ENCODE measurements at regions of chr16 and their contacts with region 1.

Region 1: DNA sequence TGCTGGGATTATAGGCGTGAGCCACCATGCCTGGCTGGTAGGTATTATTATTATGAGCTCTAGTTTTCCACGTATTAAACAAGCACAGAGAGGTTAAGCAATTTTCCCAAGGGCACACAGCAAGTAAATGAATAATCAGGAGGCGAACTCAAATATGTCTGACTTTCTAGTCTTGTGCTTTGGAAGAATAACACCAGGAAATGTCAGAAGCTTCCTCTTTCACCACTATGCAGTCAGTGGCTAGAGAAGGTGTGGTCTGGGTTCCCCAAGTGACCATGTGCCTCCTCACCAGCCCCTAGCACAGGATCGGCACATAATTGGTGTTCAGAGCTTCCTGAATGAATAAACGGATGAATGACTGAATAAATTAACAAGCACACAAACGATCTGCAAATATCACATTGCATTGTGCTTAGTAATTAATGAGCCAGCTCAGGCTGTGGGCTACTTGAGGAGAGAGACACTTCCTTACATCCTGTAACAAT is 21.6 kb upstream of the SCNN1B start:
- DNase-seq: no peak
- H3K4me3 Mint-ChIP-seq: no peak overlapping the region
- H3K27ac Mint-ChIP-seq: no peak overlapping the region
- H3K4me1 Mint-ChIP-seq: peaks cover 37% of the 10 kb centered on the region
- H3K27me3 Mint-ChIP-seq: no peaks in the 10 kb centered on the region
- CTCF ChIP-seq: no peak

Region 2: DNA sequence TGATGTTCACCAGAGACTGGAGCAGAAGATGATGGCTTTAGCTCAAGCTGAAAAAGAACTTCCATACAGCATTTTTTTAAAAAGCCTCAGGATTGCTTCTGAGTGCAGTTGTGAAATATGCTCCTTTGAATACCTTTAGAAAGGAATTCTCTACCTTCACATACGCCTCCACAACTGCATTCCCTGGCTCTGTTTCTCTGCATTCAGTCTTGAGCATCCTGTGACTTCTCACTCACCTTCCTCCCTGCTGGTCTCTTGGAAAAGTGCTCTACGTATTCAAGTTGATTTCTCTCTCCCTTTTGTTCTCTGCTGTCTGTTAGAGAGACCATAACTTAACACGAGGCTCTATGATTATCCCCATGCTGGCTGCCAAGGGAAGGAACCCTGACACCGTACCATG is 432.1 kb before region 1 on chr16:
- CTCF ChIA-PET with region 1: no interaction called
- POLR2A ChIA-PET with region 1: no interaction called
- intact Hi-C with region 1: no loop called
- DNase-seq: peak; percentile 4
- H3K4me3 Mint-ChIP-seq: no peak overlapping the region
- H3K27ac Mint-ChIP-seq: no peak overlapping the region
- H3K4me1 Mint-ChIP-seq: peaks cover 16% of the 10 kb centered on the region
- H3K27me3 Mint-ChIP-seq: peaks cover 59% of the 10 kb centered on the region
- CTCF ChIP-seq: no peak

Region 3: GRCh38 chr16:23217646-23218045 is 62.9 kb before region 1 on chr16:
- CTCF ChIA-PET with region 1: interaction called, 3 read pairs
- POLR2A ChIA-PET with region 1: interaction called, 20 read pairs
- intact Hi-C with region 1: no loop called
- DNase-seq: peak; percentile 17
- H3K4me3 Mint-ChIP-seq: no peak overlapping the region
- H3K27ac Mint-ChIP-seq: peak overlapping the region; percentile 9
- H3K4me1 Mint-ChIP-seq: peaks cover 5% of the 10 kb centered on the region
- H3K27me3 Mint-ChIP-seq: no peaks in the 10 kb centered on the region
- CTCF ChIP-seq: no peak

Region 4: GRCh38 chr16:23254338-23254737 is 26.2 kb before region 1 on chr16:
- CTCF ChIA-PET with region 1: interaction called, 12 read pairs
- POLR2A ChIA-PET with region 1: interaction called, 204 read pairs
- intact Hi-C with region 1: no loop called
- DNase-seq: peak; percentile 75
- H3K4me3 Mint-ChIP-seq: no peak overlapping the region
- H3K27ac Mint-ChIP-seq: peak overlapping the region; percentile 82
- H3K4me1 Mint-ChIP-seq: peaks cover 40% of the 10 kb centered on the region
- H3K27me3 Mint-ChIP-seq: no peaks in the 10 kb centered on the region
- CTCF ChIP-seq: no peak

Region 5: GRCh38 chr16:23296994-23297393 is 16.5 kb after region 1 on chr16:
- CTCF ChIA-PET with region 1: interaction called, 6 read pairs
- POLR2A ChIA-PET with region 1: interaction called, 13 read pairs
- intact Hi-C with region 1: no loop called
- DNase-seq: no peak
- H3K4me3 Mint-ChIP-seq: no peak overlapping the region
- H3K27ac Mint-ChIP-seq: no peak overlapping the region
- H3K4me1 Mint-ChIP-seq: peaks cover 17% of the 10 kb centered on the region
- H3K27me3 Mint-ChIP-seq: no peaks in the 10 kb centered on the region
- CTCF ChIP-seq: no peak

Region 6: GRCh38 chr16:23324730-23325129 is 44.2 kb after region 1 on chr16:
- CTCF ChIA-PET with region 1: interaction called, 5 read pairs
- POLR2A ChIA-PET with region 1: interaction called, 26 read pairs
- intact Hi-C with region 1: no loop called
- DNase-seq: peak; percentile 95
- H3K4me3 Mint-ChIP-seq: peak overlapping the region; percentile 57
- H3K27ac Mint-ChIP-seq: peak overlapping the region; percentile 95
- H3K4me1 Mint-ChIP-seq: peaks cover 16% of the 10 kb centered on the region
- H3K27me3 Mint-ChIP-seq: no peaks in the 10 kb centered on the region
- CTCF ChIP-seq: no peak

Region 7: GRCh38 chr16:23391381-23392222 is 111.1 kb after region 1 on chr16:
- CTCF ChIA-PET with region 1: interaction called, 3 read pairs
- POLR2A ChIA-PET with region 1: interaction called, 40 read pairs
- intact Hi-C with region 1: no loop called
- DNase-seq: peak; percentile 29
- H3K4me3 Mint-ChIP-seq: no peak overlapping the region
- H3K27ac Mint-ChIP-seq: peak overlapping the region; percentile 92
- H3K4me1 Mint-ChIP-seq: peaks cover 36% of the 10 kb centered on the region
- H3K27me3 Mint-ChIP-seq: no peaks in the 10 kb centered on the region
- CTCF ChIP-seq: no peak